SK-N-SH (cell line): ENCODE measurements at regions of chr10 and their contacts with region 1.

Region 1: DNA sequence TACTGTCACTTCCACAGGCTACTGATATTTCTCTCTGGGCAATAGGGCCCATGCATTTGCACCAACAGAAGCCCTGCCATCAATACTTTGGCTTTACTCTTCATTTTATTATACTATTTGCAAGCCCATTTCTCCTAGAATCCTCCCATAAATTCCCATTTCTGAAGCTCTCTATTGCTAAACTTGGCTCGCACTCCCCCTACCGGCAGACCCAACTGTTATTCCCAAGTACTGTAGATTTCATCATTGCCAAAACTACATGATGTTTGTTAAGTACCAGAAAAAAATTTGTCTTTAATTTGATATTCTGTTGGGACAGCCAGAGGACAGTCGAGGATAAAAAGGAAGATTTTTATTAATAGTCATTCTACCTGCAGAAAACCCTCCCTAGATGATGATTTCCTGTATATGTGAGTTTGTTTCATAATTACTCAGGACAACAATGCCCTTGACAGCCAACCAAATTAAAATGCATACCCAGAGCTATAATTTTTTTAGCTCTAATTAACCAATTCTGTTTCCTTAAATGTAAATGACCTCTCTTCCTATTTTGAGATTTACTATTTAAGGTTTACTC is 298.6 kb downstream of the REEP3 start:
- DNase-seq: peak; percentile 62
- H3K4me3 ChIP-seq: no peak overlapping the region; a peak in 1 of 4 replicates
- H3K27ac ChIP-seq: no peak overlapping the region
- H3K4me1 ChIP-seq: no peaks in the 10 kb centered on the region
- H3K27me3 ChIP-seq: no peaks in the 10 kb centered on the region
- CTCF ChIP-seq: peak; percentile 91
- EP300 ChIP-seq: no peak
- RAD21 ChIP-seq: peak; percentile 80

Region 2: DNA sequence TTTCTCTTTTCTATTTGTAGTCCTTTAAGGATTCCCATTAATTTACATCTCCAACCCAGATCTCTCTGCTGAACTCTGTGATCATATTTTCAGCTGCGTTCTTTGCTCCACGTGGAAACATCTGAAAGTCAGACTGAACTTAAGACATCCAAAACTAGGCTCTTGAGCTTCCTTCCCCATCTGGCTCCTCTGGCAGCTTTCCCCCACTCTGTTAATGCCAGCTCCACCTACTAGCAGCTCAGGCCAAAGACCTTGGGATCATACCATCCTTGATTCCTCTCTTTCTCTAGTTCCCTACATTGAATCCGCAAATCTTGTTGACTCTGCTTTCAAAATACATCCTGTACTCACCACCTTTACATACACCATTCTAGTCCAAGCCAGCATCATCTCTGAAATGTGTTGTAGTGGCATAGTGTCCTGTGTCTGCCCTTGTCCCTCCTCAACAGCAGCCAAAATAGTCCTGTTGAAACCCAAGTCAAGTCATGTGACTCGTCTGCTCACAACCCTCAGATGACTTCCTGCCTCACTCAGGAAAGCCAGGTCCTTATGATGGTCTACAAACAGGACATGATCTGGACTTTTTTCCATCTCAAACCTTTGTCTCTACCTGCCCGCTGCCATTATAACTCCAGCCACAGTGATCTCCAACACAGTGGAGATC is 291.6 kb before region 1 on chr10:
- CTCF ChIA-PET with region 1: no interaction called
- POLR2A ChIA-PET with region 1: no interaction called
- DNase-seq: no peak
- H3K4me3 ChIP-seq: no peak overlapping the region
- H3K27ac ChIP-seq: no peak overlapping the region
- H3K4me1 ChIP-seq: peaks cover 5 to 6% of the 10 kb centered on the region in 2 experiments; a peak in 3 of 4 replicates
- H3K27me3 ChIP-seq: no peaks in the 10 kb centered on the region
- CTCF ChIP-seq: no peak
- EP300 ChIP-seq: no peak
- RAD21 ChIP-seq: no peak

Region 3: GRCh38 chr10:63562857-63563256 is 257.0 kb before region 1 on chr10:
- CTCF ChIA-PET with region 1: no interaction called
- POLR2A ChIA-PET with region 1: no interaction called
- DNase-seq: no peak
- H3K4me3 ChIP-seq: no peak overlapping the region
- H3K27ac ChIP-seq: peak overlapping the region in 1 of 2 experiments; percentile 64; a peak in 2 of 4 replicates
- H3K4me1 ChIP-seq: peaks cover 0 to 14% of the 10 kb centered on the region in 2 experiments; a peak in 2 of 4 replicates
- H3K27me3 ChIP-seq: no peaks in the 10 kb centered on the region
- CTCF ChIP-seq: no peak
- EP300 ChIP-seq: no peak
- RAD21 ChIP-seq: no peak

Region 4: DNA sequence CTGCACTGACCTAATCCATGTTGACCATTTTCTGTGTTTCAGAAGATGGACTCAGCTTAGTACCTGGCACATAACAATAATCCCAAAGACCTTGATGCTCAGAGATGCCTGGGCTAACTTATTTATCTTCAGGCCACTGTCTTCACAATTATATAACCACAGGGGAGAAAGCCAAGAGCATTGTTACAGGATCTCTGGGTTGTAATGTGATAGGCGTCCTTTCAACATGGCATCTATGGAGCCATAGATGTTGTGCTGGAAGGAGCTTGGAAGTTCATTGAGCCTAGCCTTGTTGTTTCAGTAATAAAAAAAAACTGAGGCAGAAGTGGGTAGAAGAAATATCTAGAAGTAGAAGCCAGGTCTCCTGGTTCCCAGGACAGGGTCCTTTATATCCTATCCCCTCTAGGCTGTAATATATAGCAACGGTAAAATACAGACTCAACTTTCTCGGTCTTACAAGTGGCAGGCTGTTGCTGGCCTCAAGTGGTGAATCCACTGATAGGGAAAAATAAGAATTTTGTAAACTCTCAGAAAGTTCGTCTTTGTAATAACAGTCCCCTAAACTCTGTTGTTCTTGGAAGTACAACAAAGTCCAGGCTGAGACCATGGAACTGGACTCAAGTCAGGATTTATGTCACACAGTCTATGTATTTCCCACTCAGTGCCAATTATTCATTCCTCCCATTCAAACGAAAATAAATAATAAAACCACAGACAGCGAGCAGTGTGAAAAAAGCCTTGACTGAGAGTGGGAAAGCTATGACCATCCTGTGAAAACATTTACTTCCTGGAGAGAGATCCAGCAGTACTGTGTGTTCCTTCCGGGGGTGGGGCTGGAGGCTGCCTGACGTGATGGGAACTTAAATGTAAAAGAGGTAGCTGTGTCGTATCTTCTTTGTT is 21.0 kb before region 1 on chr10:
- CTCF ChIA-PET with region 1: interaction called, 16 read pairs
- POLR2A ChIA-PET with region 1: no interaction called
- DNase-seq: no peak
- H3K4me3 ChIP-seq: no peak overlapping the region
- H3K27ac ChIP-seq: peak overlapping the region in 1 of 2 experiments; percentile 60; a peak in 1 of 4 replicates
- H3K4me1 ChIP-seq: no peaks in the 10 kb centered on the region; a peak in 1 of 4 replicates
- H3K27me3 ChIP-seq: no peaks in the 10 kb centered on the region; the same call in 1 of the 2 replicates
- CTCF ChIP-seq: no peak
- EP300 ChIP-seq: no peak
- RAD21 ChIP-seq: no peak

Region 5: GRCh38 chr10:63843108-63843507 is 23.3 kb after region 1 on chr10:
- CTCF ChIA-PET with region 1: interaction called, 14 read pairs
- POLR2A ChIA-PET with region 1: no interaction called
- DNase-seq: no peak
- H3K4me3 ChIP-seq: no peak overlapping the region
- H3K27ac ChIP-seq: no peak overlapping the region
- H3K4me1 ChIP-seq: no peaks in the 10 kb centered on the region; a peak in 2 of 4 replicates
- H3K27me3 ChIP-seq: no peaks in the 10 kb centered on the region; the same call in 1 of the 2 replicates
- CTCF ChIP-seq: no peak
- EP300 ChIP-seq: no peak
- RAD21 ChIP-seq: no peak

Region 6: DNA sequence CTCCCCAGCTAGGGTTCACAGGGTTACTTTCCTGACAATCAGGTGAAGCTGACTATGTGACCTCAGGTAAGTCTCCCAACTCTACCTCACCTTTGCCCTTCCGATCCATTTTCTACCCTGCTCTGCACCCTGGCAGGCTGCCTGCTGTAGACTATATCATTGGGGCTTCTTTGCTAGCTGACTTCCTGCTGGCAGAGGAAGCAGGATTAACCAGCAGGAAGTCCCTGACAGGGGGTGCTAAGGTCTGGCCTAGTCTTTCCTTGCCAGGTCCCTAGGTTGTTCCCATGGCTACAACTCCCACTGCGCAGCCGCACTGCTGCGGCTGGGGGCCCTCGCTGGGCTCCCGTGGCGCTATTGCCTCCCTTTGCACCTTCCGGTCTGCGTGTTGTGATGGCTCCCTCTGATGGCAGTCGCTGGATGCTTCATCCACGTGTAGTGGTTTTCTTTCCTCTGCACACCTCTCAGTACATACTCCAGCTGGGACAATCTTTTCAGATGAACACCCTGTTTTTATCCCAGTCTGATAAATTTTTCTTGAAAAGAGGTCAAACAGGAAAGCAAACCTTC is 67.3 kb after region 1 on chr10:
- CTCF ChIA-PET with region 1: no interaction called
- POLR2A ChIA-PET with region 1: no interaction called
- DNase-seq: no peak
- H3K4me3 ChIP-seq: no peak overlapping the region
- H3K27ac ChIP-seq: no peak overlapping the region
- H3K4me1 ChIP-seq: no peaks in the 10 kb centered on the region
- H3K27me3 ChIP-seq: no peaks in the 10 kb centered on the region
- CTCF ChIP-seq: no peak; the same call in 1 of the 2 replicates
- EP300 ChIP-seq: no peak
- RAD21 ChIP-seq: no peak